ENCODE measurements at regions of chr1 and their contacts with region 1.

Region 1: DNA sequence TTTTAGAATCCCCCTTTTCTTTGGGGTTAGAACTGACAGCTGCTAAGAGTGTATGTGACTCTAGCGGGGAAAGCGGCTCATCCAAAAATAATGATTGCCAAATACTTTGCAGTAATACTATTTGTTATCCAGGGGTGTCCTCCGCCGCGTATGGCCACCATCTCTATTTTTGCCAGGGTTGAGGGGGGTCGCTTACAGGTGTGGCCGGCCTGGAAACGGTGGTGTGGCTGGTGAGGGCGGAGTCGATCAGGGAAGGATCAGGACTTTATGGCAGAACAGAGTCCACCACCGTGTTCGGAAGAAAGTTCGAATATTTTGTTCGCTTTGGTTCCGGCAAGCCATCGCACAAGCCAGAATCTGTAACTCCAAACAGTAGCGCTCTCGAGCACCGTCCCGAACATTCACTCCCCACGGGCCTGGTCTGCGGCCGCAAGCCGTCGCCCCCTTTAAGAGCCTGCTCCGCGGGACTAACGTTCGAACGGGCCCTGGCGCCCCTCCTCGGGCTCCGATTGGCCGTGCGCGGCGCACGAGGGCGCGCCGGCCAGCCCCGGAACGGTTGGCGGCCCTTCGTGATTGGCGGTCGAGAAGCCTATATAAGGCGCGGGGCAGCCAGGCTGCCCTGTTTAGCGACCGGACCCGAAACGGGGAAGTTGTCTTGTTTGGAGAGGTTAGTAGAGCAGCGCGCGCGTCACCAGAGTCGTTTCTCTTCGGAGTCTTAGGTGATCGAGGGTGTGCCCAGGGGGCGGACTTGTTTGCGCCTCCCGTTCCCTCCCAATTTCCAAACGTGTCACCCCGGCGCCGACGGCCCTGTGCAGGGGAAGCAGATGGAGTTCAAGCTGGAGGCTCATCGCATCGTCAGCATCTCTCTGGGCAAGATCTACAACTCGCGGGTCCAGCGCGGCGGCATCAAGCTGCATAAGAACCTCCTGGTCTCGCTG is at the start of gene IER5:
- DNase-seq: peak; percentile 83
- ATAC-seq: peak; percentile 82
- H3K4me3 ChIP-seq: peak within 1 kb of the TSS; percentile 99
- H3K27ac ChIP-seq: peak within 1 kb of the TSS; percentile 97
- H3K4me1 ChIP-seq: peaks cover 13% of the 10 kb centered on the region; the same call in 1 of the 2 replicates
- H3K27me3 ChIP-seq: no peaks in the 10 kb centered on the region
- CTCF ChIP-seq: 0 out of 6 replicates have a peak, but pooled peaks of 1 of the 3 experiments have one; percentile 0
- EP300 ChIP-seq: 0 out of 4 replicates have a peak, but pooled peaks of 1 of the 2 experiments have one; percentile 15
- POLR2A ChIP-seq: peak; percentile 98
- RAD21 ChIP-seq: no peak
- polyA plus RNA-seq, gene IER5: 6.2 to 19.5 TPM

Region 2: DNA sequence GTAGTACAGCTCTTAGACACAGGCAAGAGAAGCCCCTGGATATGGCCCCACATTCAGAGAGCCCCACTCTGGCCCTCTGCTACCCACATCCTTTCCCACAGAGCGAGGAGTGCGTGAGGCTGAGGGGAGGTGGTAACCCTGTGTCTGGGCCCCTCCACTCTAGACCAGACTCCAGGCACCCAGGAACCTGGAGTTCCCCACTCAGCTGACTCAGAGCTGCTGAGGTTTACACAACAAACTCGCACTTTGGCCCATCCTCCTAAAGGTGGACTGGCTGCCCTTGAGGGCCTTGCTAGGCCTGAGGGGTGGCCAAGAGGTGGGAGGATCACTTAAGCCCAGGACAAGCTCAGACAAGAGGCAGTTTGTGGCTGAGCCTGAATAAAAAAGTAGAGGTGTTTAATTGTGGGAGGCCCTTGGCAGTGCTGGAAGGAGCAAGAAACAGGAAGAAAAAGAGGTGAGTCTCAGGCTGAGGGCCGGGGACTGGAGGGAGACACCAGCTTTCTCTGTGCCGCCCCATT is 43.8 kb before region 1 on chr1:
- CTCF ChIA-PET with region 1: interaction called, 86 read pairs
- POLR2A ChIA-PET with region 1: interaction called, 20 read pairs
- RAD21 ChIA-PET with region 1: interaction called, 31 read pairs
- SMC1A ChIA-PET with region 1: interaction called, 20 read pairs
- in situ Hi-C with region 1: loop called (anchors 5 kb)
- intact Hi-C with region 1: no loop called
- DNase-seq: peak; percentile 60
- ATAC-seq: peak; percentile 95
- H3K4me3 ChIP-seq: no peak overlapping the region; the same call in 1 of the 2 replicates
- H3K27ac ChIP-seq: peak overlapping the region; percentile 81
- H3K4me1 ChIP-seq: peaks cover 20% of the 10 kb centered on the region
- H3K27me3 ChIP-seq: no peaks in the 10 kb centered on the region
- CTCF ChIP-seq: no peak
- EP300 ChIP-seq: peak in 1 of 2 experiments; percentile 44; a peak in 1 of 4 replicates
- POLR2A ChIP-seq: peak; percentile 51; the same call in 1 of the 2 replicates
- RAD21 ChIP-seq: no peak

Region 3: DNA sequence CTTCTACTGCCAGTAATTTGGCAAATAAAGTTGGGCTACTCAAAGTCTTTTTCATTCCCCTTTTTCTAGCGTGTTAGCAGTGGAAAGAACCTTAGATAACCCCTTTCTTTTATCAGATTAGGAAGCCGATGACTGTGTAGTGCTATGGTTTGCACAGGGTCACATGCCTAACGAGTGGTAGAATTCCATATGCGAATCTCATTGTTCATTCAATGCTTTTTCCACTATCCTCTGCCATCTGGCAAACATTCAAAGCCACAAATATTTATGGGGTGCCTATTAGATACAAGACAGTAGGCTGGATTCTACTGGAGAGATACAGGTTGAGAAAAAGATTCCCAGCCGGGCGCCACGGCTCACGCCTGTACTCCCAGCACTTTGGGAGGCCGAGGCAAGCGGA is 14.7 kb before region 1 on chr1:
- CTCF ChIA-PET with region 1: interaction called, 9 read pairs
- POLR2A ChIA-PET with region 1: interaction called, 3 read pairs
- RAD21 ChIA-PET with region 1: interaction called, 3 read pairs
- SMC1A ChIA-PET with region 1: interaction called, 16 read pairs
- in situ Hi-C with region 1: no loop called
- intact Hi-C with region 1: no loop called
- DNase-seq: no peak
- ATAC-seq: no peak
- H3K4me3 ChIP-seq: no peak overlapping the region
- H3K27ac ChIP-seq: no peak overlapping the region
- H3K4me1 ChIP-seq: peaks cover 19% of the 10 kb centered on the region
- H3K27me3 ChIP-seq: no peaks in the 10 kb centered on the region
- CTCF ChIP-seq: no peak
- EP300 ChIP-seq: no peak
- POLR2A ChIP-seq: no peak
- RAD21 ChIP-seq: no peak

Region 4: DNA sequence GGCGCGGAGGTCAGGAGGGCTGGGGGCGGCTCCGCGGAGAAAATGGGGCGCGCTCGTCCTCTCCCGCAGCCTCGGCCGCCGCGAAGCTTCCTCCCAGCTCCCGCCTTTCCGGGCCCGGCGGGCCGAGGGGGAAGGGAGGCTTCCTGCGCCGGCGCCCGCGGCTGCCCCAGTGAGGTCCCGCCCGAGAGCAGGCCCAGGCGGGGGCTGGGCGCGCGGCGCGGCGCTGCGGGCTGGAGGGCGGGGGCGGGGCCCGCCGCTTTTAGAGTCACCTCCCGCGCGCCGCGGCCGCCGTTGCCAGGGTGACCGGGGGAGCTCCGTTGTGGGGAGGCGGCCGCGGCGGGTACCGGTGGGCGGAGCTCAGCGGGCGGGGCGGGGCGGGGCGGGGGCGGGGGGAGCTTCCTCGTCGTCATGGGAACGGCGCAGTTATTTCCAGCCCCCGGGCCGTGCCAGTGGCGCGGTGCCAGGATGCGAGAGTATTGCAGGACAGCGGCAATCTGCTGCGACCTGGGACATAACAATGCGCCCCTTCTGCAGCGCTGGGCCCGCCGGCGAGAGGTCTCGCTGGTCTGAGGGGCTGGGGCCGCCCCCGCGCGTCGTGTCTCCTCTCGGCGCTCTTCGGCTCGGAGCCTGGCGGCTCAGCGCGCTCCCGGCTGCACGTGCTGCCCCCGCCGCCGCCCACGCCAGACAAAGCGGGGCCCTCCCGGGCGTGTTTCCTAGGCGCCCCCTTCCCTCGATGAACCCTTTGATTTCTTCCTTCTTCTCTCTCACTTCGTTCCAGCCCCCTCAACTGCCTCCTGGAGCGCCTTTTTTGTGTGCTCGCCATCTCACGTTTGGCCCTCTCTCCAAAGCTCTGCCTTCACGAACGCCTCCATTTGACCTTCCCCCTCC is 17.0 kb after region 1 on chr1:
- CTCF ChIA-PET with region 1: interaction called, 18 read pairs
- POLR2A ChIA-PET with region 1: interaction called, 142 read pairs
- RAD21 ChIA-PET with region 1: interaction called, 45 read pairs
- SMC1A ChIA-PET with region 1: interaction called, 123 read pairs
- in situ Hi-C with region 1: no loop called
- intact Hi-C with region 1: no loop called
- DNase-seq: no peak
- ATAC-seq: peak; percentile 82
- H3K4me3 ChIP-seq: peak overlapping the region; percentile 94
- H3K27ac ChIP-seq: peak overlapping the region; percentile 70
- H3K4me1 ChIP-seq: peaks cover 44% of the 10 kb centered on the region
- H3K27me3 ChIP-seq: no peaks in the 10 kb centered on the region
- CTCF ChIP-seq: no peak
- EP300 ChIP-seq: no peak
- POLR2A ChIP-seq: peak; percentile 65
- RAD21 ChIP-seq: no peak

Region 5: DNA sequence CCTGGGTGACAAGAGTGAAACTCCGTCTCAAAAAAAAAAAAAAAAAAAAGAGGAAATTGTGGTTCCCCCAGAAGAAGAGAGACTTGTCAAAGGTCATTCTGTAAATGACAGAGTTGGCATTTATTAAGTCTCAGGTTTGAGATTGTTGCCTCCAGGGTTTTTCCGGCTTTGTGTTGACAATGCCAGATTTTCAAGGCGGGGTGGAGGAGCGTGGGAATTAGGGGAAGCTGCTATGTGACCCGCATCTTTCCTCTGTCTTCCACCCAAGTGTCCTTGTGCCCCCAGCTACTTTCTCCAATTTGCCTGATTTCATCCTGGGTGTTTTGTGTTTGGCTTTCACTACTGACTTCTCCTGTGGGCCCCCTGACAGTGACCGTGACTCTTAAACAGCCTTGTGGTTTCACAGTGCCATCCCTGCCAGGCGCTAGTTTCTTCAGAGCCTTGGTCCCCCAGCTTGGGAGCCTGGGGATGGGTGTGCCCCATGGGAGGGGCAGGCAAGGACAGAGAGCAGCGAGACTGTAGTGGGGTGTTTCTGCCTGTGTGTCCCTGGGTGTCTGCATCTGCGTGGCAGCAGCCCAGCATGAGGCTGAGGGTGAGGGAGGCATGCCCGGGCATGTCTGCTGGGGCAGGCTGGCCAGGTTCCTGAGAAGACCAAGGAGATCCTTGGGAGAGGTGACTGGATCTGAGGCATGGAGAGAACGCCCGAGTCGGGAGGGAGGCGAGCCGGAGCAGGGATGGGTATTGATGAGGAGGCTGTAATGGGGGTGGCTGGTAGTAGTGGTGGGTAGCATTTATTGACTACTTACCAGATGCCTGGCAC is 46.4 kb after region 1 on chr1:
- CTCF ChIA-PET with region 1: interaction called, 1,067 read pairs
- POLR2A ChIA-PET with region 1: interaction called, 77 read pairs
- RAD21 ChIA-PET with region 1: interaction called, 966 read pairs
- SMC1A ChIA-PET with region 1: interaction called, 1,399 read pairs
- in situ Hi-C with region 1: loop called (anchors 5 kb)
- intact Hi-C with region 1: loop called (anchors 1 kb)
- DNase-seq: peak; percentile 91
- ATAC-seq: peak; percentile 57
- H3K4me3 ChIP-seq: peak overlapping the region; percentile 66
- H3K27ac ChIP-seq: peak overlapping the region; percentile 92
- H3K4me1 ChIP-seq: peaks cover 73% of the 10 kb centered on the region
- H3K27me3 ChIP-seq: no peaks in the 10 kb centered on the region
- CTCF ChIP-seq: no peak
- EP300 ChIP-seq: peak; percentile 4 to 40; a peak in 2 of 4 replicates
- POLR2A ChIP-seq: peak; percentile 81
- RAD21 ChIP-seq: no peak

Region 6: DNA sequence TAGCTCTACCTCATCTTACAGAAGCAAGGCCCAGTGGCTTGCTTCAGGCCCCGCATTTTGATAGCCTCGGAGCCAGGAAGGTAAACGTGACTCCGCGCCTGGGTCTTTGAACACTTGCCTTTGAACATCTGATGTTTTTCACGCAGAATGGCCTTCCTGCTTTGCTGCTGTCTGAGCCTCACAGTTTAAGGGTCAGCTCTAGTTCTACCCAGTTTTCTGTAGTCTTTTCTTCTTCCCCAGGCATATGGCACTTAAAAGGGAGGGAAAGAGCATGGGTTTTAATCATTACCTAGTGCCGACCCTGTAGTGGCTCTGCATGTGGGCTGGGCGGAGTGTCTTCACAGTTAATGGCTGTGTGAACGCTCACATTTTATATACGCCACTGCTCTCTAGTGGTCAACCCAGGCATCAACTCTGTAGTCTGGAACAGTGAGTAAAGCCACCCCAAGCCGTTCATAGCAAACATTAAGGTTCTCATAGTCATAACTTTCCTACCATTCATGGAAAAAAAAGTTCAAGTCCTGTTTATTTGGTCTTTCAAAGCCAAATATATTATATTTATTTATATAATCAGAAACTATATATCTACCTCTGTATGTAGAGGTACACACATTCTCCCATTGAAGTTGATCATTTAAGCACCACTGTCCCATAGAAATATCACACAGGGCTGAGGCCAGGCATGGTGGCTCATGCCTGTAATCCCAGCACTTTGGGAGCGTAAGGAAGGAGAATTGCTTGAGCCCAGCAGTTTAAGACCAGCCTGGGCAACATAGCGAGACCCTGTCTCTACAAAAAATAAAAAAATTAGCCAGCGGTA is 78.2 kb after region 1 on chr1:
- CTCF ChIA-PET with region 1: interaction called, 17 read pairs
- POLR2A ChIA-PET with region 1: interaction called, 3 read pairs
- RAD21 ChIA-PET with region 1: interaction called, 22 read pairs
- SMC1A ChIA-PET with region 1: interaction called, 16 read pairs
- in situ Hi-C with region 1: no loop called
- intact Hi-C with region 1: loop called (anchors 1 kb)
- DNase-seq: no peak
- ATAC-seq: peak; percentile 100
- H3K4me3 ChIP-seq: no peak overlapping the region
- H3K27ac ChIP-seq: no peak overlapping the region
- H3K4me1 ChIP-seq: no peaks in the 10 kb centered on the region
- H3K27me3 ChIP-seq: no peaks in the 10 kb centered on the region
- CTCF ChIP-seq: peak; percentile 83 to 88 (median 84)
- EP300 ChIP-seq: no peak
- POLR2A ChIP-seq: no peak
- RAD21 ChIP-seq: peak; percentile 94